PC-9 (cell line): ENCODE measurements at regions of chr3 and their contacts with region 1.

Region 1: DNA sequence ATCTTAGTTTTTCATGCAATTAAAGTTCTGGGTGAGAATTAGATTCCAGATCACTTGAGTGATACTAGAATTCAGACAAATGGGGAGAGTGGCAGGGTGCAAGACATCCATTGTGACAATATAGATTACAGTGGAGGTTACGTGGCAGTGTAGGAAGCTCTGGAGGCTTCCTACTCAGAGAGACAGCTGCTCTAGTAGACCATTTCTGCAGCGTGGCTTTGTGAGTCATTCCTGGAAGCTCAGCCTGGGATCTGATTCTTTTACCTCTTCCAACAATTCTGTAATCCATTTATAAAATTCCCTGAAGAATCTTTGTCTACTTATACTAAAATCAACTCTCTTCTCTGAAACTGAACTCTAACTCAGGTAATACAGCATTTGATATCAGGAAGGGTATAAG is 90.4 kb upstream of the ASB14 start:
- DNase-seq: no peak
- H3K4me3 ChIP-seq: no peak overlapping the region
- H3K27ac ChIP-seq: no peak overlapping the region
- H3K4me1 ChIP-seq: no peaks in the 10 kb centered on the region
- H3K27me3 ChIP-seq: no peaks in the 10 kb centered on the region
- CTCF ChIP-seq: no peak

Region 2: GRCh38 chr3:57354768-57355167 is 28.2 kb before region 1 on chr3:
- CTCF ChIA-PET with region 1: interaction called, 11 read pairs
- POLR2A ChIA-PET with region 1: no interaction called
- intact Hi-C with region 1: no loop called
- DNase-seq: no peak
- H3K4me3 ChIP-seq: no peak overlapping the region
- H3K27ac ChIP-seq: no peak overlapping the region
- H3K4me1 ChIP-seq: no peaks in the 10 kb centered on the region
- H3K27me3 ChIP-seq: no peaks in the 10 kb centered on the region
- CTCF ChIP-seq: no peak